Endothelial cell of umbilical vein (primary cell): ENCODE measurements at regions of chr1 and their contacts with region 1.

Region 1: GRCh38 chr1:64038965-64039926 is 164.2 kb upstream of the UBE2U start:
- DNase-seq: peak; percentile 84
- H3K4me3 ChIP-seq: no peak overlapping the region
- H3K27ac ChIP-seq: no peak overlapping the region
- H3K4me1 ChIP-seq: peaks cover 6% of the 10 kb centered on the region
- H3K27me3 ChIP-seq: no peaks in the 10 kb centered on the region
- CTCF ChIP-seq: no peak
- POLR2A ChIP-seq: no peak

Region 2: GRCh38 chr1:62263006-62263813 is 1776.0 kb before region 1 on chr1:
- CTCF ChIA-PET with region 1: no interaction called
- POLR2A ChIA-PET with region 1: no interaction called
- dilution Hi-C with region 1: no loop called
- intact Hi-C with region 1: no loop called
- DNase-seq: no peak
- H3K4me3 ChIP-seq: no peak overlapping the region
- H3K27ac ChIP-seq: no peak overlapping the region
- H3K4me1 ChIP-seq: no peaks in the 10 kb centered on the region
- H3K27me3 ChIP-seq: no peaks in the 10 kb centered on the region
- CTCF ChIP-seq: no peak
- POLR2A ChIP-seq: no peak

Region 3: DNA sequence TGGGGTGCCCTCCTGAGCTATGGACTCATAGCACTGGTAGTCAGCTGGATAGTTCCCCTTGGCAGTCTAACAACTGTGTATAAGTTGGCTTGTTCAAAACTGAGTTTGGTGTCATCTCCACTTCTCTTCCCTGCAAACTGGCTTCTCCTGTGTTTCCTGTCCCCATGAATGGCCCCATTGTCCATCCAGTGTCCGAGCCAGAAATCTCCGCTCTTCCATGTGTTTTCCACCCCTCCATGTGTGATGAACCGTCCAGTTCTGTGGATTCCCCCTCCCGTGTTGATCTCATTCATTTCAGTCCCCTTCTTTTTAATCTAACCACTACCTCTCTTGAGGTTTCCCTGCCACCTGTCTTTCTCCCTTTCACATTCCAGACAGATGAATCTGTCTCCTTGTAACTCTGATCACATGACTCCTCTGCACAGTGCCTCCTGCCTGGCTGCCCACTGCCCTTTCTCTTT is 69.8 kb before region 1 on chr1:
- CTCF ChIA-PET with region 1: no interaction called
- POLR2A ChIA-PET with region 1: no interaction called
- dilution Hi-C with region 1: no loop called
- intact Hi-C with region 1: no loop called
- DNase-seq: no peak
- H3K4me3 ChIP-seq: no peak overlapping the region
- H3K27ac ChIP-seq: no peak overlapping the region
- H3K4me1 ChIP-seq: peaks cover 5% of the 10 kb centered on the region
- H3K27me3 ChIP-seq: no peaks in the 10 kb centered on the region
- CTCF ChIP-seq: no peak
- POLR2A ChIP-seq: no peak

Region 4: DNA sequence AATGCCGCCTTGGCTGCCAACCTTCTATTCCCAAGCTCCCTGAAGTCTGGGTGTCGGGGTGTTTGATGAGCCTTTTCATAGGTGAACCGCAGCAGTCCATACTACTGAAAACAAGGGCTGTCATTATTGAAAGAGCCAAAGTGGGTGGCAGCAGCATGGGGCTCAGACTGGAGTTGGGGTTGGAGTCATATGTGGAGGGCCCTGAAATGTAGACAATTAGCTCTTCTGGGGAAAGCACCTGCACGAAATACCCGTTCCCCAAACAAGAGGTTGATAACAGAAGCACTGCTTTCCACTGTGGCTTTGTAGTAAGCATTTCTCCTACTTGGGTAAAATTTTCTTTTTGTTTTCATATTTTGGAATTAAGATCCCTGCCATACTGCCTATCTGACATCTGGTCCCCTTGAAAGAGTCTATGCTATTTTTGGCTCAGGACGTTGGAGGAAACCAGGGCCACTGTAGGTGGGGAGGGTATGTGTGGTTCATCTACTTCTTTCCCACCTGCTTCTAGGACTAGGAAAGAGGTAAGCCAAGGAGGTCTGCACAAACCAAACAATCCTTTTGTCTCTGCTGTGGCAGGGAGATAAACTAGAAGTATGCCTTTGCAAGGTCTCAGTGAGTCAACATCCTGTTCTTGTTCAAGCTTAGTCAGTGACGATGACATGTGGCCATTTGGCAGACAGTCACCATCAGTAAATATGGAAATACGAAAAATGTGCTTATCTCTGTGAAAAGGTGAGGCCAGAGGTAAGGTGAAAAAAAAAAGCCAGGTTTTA is 32.8 kb before region 1 on chr1:
- CTCF ChIA-PET with region 1: interaction called, 5 read pairs
- POLR2A ChIA-PET with region 1: no interaction called
- dilution Hi-C with region 1: no loop called
- intact Hi-C with region 1: loop called (anchors 1 kb)
- DNase-seq: peak; percentile 84
- H3K4me3 ChIP-seq: no peak overlapping the region
- H3K27ac ChIP-seq: peak overlapping the region; percentile 57
- H3K4me1 ChIP-seq: peaks cover 14% of the 10 kb centered on the region
- H3K27me3 ChIP-seq: peaks cover 0 to 1% of the 10 kb centered on the region in 2 experiments
- CTCF ChIP-seq: no peak
- POLR2A ChIP-seq: no peak

Region 5: DNA sequence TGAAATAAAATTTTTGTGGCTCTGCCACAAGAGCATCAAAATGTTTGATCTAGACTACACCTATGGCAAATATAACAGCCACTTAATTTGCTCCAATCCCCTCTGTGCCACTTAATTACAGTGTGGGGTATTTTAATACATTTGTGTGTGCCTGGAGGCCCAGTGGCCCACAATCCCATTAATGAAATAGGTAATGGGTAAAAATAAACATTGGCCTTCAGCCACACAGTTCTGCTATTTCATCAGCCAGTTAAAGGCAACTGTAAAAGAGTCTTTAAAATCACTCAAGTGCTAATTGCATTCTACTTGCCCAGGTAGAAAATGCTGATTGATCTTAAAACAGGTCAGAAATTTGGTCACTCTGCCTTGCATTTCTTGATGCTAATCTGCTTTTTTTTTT is 12.6 kb after region 1 on chr1:
- CTCF ChIA-PET with region 1: no interaction called
- POLR2A ChIA-PET with region 1: no interaction called
- dilution Hi-C with region 1: no loop called
- intact Hi-C with region 1: no loop called
- DNase-seq: no peak
- H3K4me3 ChIP-seq: no peak overlapping the region
- H3K27ac ChIP-seq: no peak overlapping the region
- H3K4me1 ChIP-seq: no peaks in the 10 kb centered on the region
- H3K27me3 ChIP-seq: no peaks in the 10 kb centered on the region
- CTCF ChIP-seq: no peak
- POLR2A ChIP-seq: no peak

Region 6: GRCh38 chr1:64073705-64074104 is 34.5 kb after region 1 on chr1:
- CTCF ChIA-PET with region 1: no interaction called
- POLR2A ChIA-PET with region 1: no interaction called
- dilution Hi-C with region 1: no loop called
- intact Hi-C with region 1: loop called (anchors 2 kb)
- DNase-seq: no peak
- H3K4me3 ChIP-seq: no peak overlapping the region
- H3K27ac ChIP-seq: no peak overlapping the region
- H3K4me1 ChIP-seq: peaks cover 7% of the 10 kb centered on the region
- H3K27me3 ChIP-seq: peaks cover 0 to 2% of the 10 kb centered on the region in 2 experiments
- CTCF ChIP-seq: no peak
- POLR2A ChIP-seq: no peak